ENCODE measurements at regions of chr19 and their contacts with region 1.

Region 1: DNA sequence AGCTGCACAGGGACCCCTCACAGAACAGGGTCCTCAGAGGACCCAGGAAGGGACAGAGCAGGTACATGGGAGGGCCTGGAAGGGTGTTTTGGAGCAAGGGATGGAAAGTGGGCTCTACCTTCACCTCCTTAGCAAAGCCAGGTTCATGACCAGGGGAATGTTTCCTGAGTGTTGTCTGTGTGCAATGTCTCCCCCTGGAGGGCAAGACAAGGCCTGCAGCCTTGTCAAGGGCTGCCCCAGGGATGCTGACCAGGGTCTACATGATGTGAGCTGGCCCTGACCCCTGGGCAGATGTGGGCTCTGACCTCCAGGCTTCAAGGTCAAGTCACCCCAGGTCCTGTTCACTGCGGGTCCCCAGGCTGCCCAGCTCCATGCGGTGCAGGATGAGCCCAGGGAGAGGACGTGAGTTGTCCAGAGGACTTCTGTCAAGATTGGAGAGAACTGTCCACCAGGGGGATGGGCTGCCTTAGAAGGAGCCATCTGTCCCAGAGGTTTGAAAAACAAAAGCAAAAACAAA is 1.0 kb upstream of the CEACAM1 start:
- DNase-seq: peak; percentile 83
- ATAC-seq: peak; percentile 95
- H3K4me3 ChIP-seq: peak overlapping the region; percentile 39
- H3K27ac ChIP-seq: peak overlapping the region; percentile 55
- H3K4me1 ChIP-seq: peaks cover 17% of the 10 kb centered on the region
- H3K27me3 ChIP-seq: no peaks in the 10 kb centered on the region
- CTCF ChIP-seq: peak; percentile 87

Region 2: GRCh38 chr19:42450314-42450934 is 78.9 kb before region 1 on chr19:
- intact Hi-C with region 1: loop called (anchors 5 kb)
- DNase-seq: peak; percentile 75
- ATAC-seq: peak; percentile 99
- H3K4me3 ChIP-seq: no peak overlapping the region
- H3K27ac ChIP-seq: peak overlapping the region; percentile 9
- H3K4me1 ChIP-seq: peaks cover 13% of the 10 kb centered on the region
- H3K27me3 ChIP-seq: no peaks in the 10 kb centered on the region
- CTCF ChIP-seq: peak; percentile 87

Region 3: DNA sequence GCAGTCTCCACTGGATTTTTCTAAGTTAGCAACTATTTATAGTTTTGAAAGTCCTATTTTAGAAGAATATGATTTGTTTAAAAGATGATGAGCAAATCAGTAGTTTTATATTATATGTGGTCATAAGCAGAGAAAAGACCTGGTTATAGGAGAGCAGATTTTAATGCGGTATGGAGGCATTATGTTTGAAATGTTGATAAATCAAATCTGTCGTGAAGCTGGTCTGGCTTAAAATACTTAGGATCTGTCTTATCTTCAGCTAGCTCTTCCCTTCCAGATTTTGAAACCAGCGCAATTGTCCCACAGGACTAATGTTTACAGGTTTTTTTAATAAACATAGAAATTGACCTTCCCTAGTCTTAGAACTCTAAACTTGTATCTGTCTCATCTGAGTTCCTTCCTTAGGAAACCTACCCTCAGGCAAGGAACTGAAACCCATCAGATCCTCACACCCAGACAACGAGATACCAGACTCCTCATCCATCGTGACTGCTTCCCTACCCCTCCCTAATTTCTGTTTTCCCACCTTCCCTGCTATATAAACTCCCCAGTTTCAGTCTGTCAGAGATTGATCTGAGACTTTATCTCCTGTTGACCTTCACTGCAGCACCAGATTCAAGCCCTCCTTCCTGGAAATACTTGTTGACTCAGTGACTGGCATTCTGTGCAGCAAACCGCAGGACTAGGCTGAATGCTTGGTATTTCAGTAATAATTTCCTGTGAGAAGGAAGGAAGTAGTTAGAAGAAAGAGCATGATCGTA is 48.8 kb before region 1 on chr19:
- intact Hi-C with region 1: no loop called
- DNase-seq: no peak
- ATAC-seq: peak; percentile 73
- H3K4me3 ChIP-seq: no peak overlapping the region
- H3K27ac ChIP-seq: peak overlapping the region; percentile 20
- H3K4me1 ChIP-seq: peaks cover 19% of the 10 kb centered on the region
- H3K27me3 ChIP-seq: no peaks in the 10 kb centered on the region
- CTCF ChIP-seq: no peak

Region 4: DNA sequence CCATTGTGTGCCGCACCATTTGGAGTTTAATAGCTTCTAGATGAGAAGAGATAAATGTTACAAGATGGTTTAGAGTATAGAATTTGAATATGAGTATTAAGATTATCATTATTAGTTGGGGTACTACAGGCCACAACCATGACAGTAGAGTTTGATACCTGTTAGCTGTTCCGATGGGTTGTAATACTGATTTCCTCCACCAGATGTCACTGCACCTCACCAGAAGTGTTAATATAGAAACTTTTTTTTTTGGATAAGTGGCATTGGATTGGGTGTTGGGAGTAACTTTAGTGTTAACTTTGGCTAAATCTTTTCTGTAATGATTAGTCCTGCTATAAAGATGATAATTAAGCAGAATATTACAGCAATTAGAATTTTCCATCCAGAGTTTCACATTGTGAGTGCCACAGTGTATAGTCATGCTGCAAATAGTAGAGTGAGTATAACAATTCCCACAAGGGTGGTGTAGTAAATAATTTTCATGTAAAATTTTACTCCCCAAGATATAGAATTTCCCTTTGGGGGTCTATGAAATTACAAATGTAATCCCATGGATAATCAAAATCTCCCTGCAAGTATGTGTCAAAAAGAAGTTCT is 154.7 kb after region 1 on chr19:
- intact Hi-C with region 1: no loop called
- DNase-seq: no peak
- ATAC-seq: no peak
- H3K4me3 ChIP-seq: no peak overlapping the region
- H3K27ac ChIP-seq: no peak overlapping the region
- H3K4me1 ChIP-seq: no peaks in the 10 kb centered on the region
- H3K27me3 ChIP-seq: no peaks in the 10 kb centered on the region
- CTCF ChIP-seq: peak; percentile 68